ENCODE measurements at regions of chr9 and their contacts with region 1.

Region 1: DNA sequence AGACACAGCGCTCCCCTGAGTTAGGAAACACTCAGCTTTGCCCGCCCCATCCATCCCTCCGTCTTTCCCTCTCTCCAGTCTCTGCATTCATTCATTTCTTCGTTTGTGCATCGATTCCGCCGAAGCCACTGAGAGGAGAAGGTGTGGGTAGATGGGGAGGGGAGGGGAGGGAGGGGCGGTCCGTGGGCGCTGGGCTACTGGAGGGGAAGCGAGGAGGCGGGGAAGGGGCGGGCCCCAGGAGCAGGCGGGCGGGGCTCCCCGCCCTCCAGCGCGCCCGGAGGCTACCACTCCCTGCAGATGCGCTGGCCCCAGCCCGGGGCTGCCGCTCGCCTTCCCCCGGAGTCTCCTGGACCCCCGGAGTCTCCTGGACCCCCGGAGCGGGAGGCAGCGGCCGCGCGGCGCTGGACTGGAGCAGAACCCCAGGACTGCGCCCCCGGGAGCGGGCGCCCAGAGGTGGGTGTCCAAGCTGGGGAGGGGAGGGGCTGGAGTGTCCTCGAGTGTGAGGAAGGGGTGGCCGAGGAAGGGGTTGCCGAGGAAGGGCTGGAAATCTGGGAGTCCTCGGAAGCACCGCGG is 159.5 kb downstream of the C9orf152 start:
- DNase-seq: peak; percentile 84
- ATAC-seq: peak; percentile 95
- H3K4me3 Mint-ChIP-seq: peak overlapping the region; percentile 90
- H3K27ac Mint-ChIP-seq: peak overlapping the region; percentile 75
- H3K4me1 Mint-ChIP-seq: peaks cover 48% of the 10 kb centered on the region
- H3K27me3 Mint-ChIP-seq: peaks cover 15% of the 10 kb centered on the region

Region 2: GRCh38 chr9:109969011-109969410 is 79.5 kb before region 1 on chr9:
- CTCF ChIA-PET with region 1: interaction called, 3 read pairs
- POLR2A ChIA-PET with region 1: interaction called, 11 read pairs
- DNase-seq: no peak
- ATAC-seq: peak; percentile 38
- H3K4me3 Mint-ChIP-seq: no peak overlapping the region
- H3K27ac Mint-ChIP-seq: peak overlapping the region; percentile 73
- H3K4me1 Mint-ChIP-seq: peaks cover 47% of the 10 kb centered on the region
- H3K27me3 Mint-ChIP-seq: peaks cover 18% of the 10 kb centered on the region

Region 3: DNA sequence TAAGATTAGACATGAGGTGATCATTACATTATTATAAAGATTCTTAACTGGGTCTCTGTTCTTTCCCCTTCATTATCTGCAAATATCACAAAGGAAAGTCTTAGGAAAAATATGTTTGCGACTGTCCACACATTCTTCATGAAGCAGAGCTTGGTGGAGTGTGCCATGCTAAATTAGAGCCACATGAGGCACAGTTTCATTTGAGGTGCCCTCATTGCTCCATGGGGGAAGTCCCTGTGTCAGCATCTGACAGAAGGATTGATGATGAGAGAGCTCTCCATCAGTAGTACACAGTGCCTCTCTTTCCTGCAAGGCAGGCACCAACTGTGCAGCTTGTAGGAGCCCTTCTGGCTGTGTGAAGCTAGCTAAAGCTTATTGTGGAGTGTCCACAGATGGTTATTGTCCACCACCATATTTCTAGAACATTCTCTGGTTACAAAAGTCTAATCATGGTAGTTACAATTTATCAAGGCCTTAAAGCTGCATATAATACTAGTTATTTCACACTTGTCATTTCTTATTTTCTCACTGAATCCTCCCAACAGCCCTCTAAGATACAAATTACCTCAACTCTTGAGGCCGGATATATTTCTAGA is 95.6 kb after region 1 on chr9:
- CTCF ChIA-PET with region 1: interaction called, 69 read pairs
- POLR2A ChIA-PET with region 1: interaction called, 56 read pairs
- DNase-seq: peak; percentile 61
- ATAC-seq: peak; percentile 68
- H3K4me3 Mint-ChIP-seq: peak overlapping the region; percentile 37
- H3K27ac Mint-ChIP-seq: peak overlapping the region; percentile 86
- H3K4me1 Mint-ChIP-seq: peaks cover 53% of the 10 kb centered on the region
- H3K27me3 Mint-ChIP-seq: no peaks in the 10 kb centered on the region